ENCODE measurements at regions of chr2 and their contacts with region 1.

Region 1: GRCh38 chr2:27264753-27265535 is 2.1 kb upstream of the SLC30A3 start:
- DNase-seq: peak; percentile 100
- H3K4me3 ChIP-seq: peak overlapping the region; percentile 49 to 55
- H3K27ac ChIP-seq: no peak overlapping the region
- H3K4me1 ChIP-seq: peaks cover 6 to 28% of the 10 kb centered on the region in 2 experiments; a peak in 1 of 4 replicates
- H3K27me3 ChIP-seq: peaks cover 86% of the 10 kb centered on the region
- CTCF ChIP-seq: peak; percentile 78
- EP300 ChIP-seq: no peak
- RAD21 ChIP-seq: peak; percentile 58

Region 2: DNA sequence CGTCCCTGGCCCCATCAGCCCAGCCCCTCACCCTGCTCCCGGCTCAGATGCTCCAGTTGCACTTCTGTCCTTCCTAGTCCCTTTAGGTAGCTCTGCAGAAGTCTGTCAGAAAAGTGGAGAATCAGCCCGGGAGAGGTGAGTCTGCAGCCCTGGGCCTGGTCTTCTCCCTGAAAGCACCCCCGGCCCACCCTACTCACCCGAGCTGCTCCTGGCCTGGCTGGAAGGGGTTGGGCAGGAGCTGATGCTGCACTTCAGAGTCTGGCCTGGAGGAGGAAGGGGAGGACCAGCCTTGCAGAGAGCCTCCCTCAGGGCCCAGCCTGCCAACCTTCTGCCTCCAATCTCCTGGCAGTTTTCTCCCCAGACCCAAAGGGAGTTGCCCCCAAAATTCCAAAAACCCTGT is 162.6 kb before region 1 on chr2:
- CTCF ChIA-PET with region 1: interaction called, 22 read pairs
- POLR2A ChIA-PET with region 1: no interaction called
- DNase-seq: no peak
- H3K4me3 ChIP-seq: no peak overlapping the region
- H3K27ac ChIP-seq: no peak overlapping the region
- H3K4me1 ChIP-seq: peaks cover 0 to under 1% of the 10 kb centered on the region in 2 experiments; a peak in 1 of 4 replicates
- H3K27me3 ChIP-seq: no peaks in the 10 kb centered on the region
- CTCF ChIP-seq: no peak
- EP300 ChIP-seq: no peak
- RAD21 ChIP-seq: no peak

Region 3: GRCh38 chr2:27221166-27221565 is 43.8 kb before region 1 on chr2:
- CTCF ChIA-PET with region 1: interaction called, 17 read pairs
- POLR2A ChIA-PET with region 1: no interaction called
- DNase-seq: no peak
- H3K4me3 ChIP-seq: no peak overlapping the region
- H3K27ac ChIP-seq: no peak overlapping the region
- H3K4me1 ChIP-seq: peaks cover 4 to 14% of the 10 kb centered on the region in 2 experiments; a peak in 3 of 4 replicates
- H3K27me3 ChIP-seq: no peaks in the 10 kb centered on the region
- CTCF ChIP-seq: no peak
- EP300 ChIP-seq: no peak
- RAD21 ChIP-seq: no peak

Region 4: DNA sequence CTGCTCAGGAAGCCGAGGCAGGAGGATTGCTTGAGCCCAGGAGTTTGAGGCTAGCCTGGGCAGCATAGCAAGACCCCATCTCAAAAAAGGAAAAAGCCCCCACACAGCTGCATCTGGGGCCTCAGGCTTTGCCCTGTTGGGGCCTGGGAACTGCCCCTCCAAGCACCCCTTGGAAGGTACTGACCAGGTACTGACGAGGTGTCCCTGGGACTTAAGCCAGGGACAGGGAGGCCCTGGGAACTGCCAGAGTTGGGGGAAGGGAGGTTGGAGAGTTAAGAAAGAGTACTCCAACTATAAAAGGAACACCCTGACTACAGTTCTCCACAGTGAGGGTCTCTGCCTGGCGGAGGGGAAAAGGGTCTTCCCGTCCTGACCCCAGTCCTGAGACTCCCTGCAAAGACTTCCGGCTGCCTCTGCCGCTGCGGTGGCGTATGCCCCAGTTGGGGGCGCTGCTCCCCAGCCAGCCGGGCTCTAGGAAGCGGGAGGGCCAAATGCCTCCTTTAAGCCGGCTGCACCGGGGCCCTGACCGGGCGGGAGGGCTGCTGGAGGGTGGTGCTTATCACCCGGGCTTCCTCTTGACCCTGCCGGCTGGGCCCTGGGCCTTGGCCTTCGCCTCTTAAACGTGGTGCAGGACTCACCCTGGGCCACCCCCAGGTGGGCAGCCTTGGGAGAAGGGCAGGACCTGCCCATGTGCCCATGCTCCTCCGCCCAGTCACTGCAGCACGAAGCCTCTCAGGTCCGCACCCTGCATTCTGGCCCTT is 14.9 kb before region 1 on chr2:
- CTCF ChIA-PET with region 1: interaction called, 133 read pairs
- POLR2A ChIA-PET with region 1: no interaction called
- DNase-seq: peak; percentile 87
- H3K4me3 ChIP-seq: no peak overlapping the region; a peak in 1 of 4 replicates
- H3K27ac ChIP-seq: no peak overlapping the region
- H3K4me1 ChIP-seq: peaks cover 5 to 12% of the 10 kb centered on the region in 2 experiments; a peak in 3 of 4 replicates
- H3K27me3 ChIP-seq: no peaks in the 10 kb centered on the region
- CTCF ChIP-seq: peak; percentile 66
- EP300 ChIP-seq: no peak
- RAD21 ChIP-seq: peak; percentile 74

Region 5: DNA sequence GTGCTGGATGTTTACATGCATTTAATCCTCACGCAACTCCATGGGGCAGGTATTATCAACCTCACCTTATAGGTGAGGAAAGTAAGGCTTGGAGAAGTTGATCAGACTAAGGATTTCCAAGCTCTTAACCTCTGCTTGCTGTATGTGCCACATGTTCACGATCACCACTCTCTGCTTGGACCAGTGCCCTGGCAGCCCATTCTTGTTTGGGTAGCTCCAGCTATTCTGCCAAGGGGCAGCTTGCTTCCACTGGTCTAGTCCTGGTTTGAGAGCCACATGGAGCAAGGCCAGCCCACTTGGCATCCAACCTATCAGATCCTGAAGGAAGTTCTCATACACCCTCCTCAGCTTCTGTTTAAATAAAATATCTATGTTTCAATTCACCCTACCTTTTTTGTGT is 1245.2 kb after region 1 on chr2:
- CTCF ChIA-PET with region 1: no interaction called
- POLR2A ChIA-PET with region 1: no interaction called
- DNase-seq: no peak
- H3K4me3 ChIP-seq: no peak overlapping the region
- H3K27ac ChIP-seq: no peak overlapping the region
- H3K4me1 ChIP-seq: peaks cover 0 to 13% of the 10 kb centered on the region in 2 experiments; a peak in 2 of 4 replicates
- H3K27me3 ChIP-seq: peaks cover 16% of the 10 kb centered on the region; the same call in 1 of the 2 replicates
- CTCF ChIP-seq: no peak
- EP300 ChIP-seq: no peak
- RAD21 ChIP-seq: no peak

Measured in SK-N-SH (cell line).